ENCODE measurements at regions of chr12 and their contacts with region 1.

Region 1: DNA sequence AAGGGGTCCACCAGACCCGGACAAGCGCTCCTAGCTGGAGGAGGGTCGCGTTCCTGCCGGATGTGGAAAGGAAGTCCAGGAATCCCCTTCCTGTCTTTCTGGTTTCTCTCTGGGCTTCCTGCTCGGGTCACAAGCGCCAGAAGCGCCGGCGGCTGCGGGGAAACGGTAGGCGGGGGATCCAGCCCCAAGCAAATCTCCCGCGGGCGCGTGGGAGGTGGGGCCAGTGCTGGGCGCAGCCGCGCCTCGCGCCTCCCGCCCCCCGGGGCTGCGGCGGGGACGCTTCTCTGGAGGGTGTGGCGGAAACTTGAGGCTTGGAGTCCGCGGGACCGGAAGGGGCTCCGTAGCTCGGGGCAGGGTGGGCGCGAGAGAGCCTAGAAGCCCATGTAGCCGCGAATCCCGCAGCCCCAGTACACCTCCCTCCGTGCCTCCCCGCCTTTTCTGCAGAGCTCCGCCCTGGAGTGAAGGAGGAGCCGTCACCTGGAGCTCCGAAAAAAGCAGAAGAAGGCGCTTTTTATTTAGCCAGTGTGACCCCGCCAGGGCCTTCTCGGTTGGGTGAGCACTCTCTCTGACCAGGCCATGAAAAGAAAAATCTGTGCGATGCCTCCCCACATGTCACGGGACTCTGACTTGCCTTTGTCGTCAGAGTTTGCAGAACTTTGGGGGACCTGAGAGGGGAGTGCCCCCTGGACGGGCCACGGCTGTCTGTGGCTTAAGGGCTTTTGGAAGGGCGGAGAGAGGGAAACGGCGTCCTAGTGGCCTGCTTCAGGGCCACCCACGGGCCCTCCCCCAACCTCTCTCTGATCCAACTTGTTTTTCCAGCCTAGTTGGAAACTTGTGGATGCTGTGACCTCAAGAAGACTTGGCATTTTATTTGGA is 21.4 kb upstream of the CLEC2D start:
- DNase-seq: peak; percentile 93
- H3K4me3 Mint-ChIP-seq: peak overlapping the region; percentile 93
- H3K27ac Mint-ChIP-seq: peak overlapping the region; percentile 97
- H3K4me1 Mint-ChIP-seq: peaks cover 75% of the 10 kb centered on the region
- H3K27me3 Mint-ChIP-seq: peaks cover 3% of the 10 kb centered on the region

Region 2: GRCh38 chr12:8949342-8950220 is 698.5 kb before region 1 on chr12 and contains the start of gene M6PR:
- intact Hi-C with region 1: loop called (anchors 5 kb)
- DNase-seq: peak; percentile 86
- H3K4me3 Mint-ChIP-seq: peak within 1 kb of the TSS; percentile 100
- H3K27ac Mint-ChIP-seq: peak within 1 kb of the TSS; percentile 92
- H3K4me1 Mint-ChIP-seq: peaks cover 72% of the 10 kb centered on the region
- H3K27me3 Mint-ChIP-seq: no peaks in the 10 kb centered on the region
- total RNA-seq, gene M6PR: 179 and 192 TPM in 2 replicates

Region 3: GRCh38 chr12:9364224-9365176 is 283.6 kb before region 1 on chr12:
- intact Hi-C with region 1: loop called (anchors 1 kb)
- DNase-seq: peak; percentile 47
- H3K4me3 Mint-ChIP-seq: peak overlapping the region; percentile 52
- H3K27ac Mint-ChIP-seq: peak overlapping the region; percentile 69
- H3K4me1 Mint-ChIP-seq: peaks cover 55% of the 10 kb centered on the region
- H3K27me3 Mint-ChIP-seq: peaks cover 27% of the 10 kb centered on the region

Region 4: DNA sequence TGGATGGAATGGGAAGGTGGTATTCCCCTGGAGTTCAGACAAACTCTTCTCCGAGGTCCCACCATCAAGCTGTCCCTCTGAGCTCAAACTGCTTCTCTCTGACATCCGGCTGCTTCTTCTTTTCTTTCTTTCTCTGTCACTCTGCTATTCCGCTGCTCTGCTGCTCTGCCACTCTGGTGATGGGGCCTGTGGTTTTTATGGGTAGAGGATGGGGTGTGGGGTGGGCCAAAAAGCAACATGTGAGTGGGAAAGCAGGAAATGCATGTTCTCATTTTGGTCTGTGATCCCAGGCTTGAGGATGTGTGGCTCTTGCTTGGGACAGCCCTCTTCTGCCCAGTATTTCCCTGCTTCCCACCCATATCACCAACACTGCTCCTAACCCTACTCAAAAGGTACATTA is 54.2 kb after region 1 on chr12:
- intact Hi-C with region 1: loop called (anchors 1 kb)
- DNase-seq: peak; percentile 58
- H3K4me3 Mint-ChIP-seq: peak overlapping the region; percentile 58
- H3K27ac Mint-ChIP-seq: peak overlapping the region; percentile 81
- H3K4me1 Mint-ChIP-seq: peaks cover 79% of the 10 kb centered on the region
- H3K27me3 Mint-ChIP-seq: no peaks in the 10 kb centered on the region

Region 5: DNA sequence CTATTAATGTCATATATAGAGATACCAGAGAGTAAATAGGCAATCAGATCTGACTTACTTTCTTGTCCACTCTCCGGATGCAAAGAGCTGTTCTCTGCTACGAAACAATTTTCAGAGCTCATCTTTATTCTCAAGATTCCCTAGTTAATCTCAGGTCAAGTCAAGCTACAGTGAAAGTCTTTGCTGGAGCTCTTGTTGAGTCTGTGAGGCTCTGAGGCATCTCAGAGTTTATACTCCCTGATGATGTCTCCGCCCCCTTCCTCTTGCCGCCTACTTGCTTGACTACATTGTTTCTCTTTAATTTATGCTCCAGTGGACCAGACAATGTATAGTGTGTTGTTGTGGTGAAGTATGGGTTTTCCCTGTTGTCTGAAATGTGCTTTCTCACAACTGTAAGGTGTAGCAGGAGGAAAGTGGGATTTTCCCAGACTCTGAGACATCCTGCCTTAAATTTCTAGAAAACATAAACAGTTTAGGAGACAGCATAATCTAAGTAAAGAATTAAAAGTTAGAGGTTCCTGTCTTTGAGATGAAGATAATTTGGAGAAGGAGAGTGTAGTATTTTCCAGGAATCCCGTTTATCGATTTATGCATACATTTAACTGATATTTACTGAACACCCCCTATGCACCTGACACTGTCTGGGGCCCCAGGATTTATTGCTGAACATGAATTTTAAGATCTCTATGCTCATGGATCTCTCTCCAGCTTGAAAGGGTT is 112.8 kb after region 1 on chr12 and contains the start of gene CD69:
- intact Hi-C with region 1: loop called (anchors 1 kb)
- DNase-seq: peak; percentile 81
- H3K4me3 Mint-ChIP-seq: peak within 1 kb of the TSS; percentile 98
- H3K27ac Mint-ChIP-seq: peak within 1 kb of the TSS; percentile 97
- H3K4me1 Mint-ChIP-seq: peaks cover 68% of the 10 kb centered on the region
- H3K27me3 Mint-ChIP-seq: peaks cover 6% of the 10 kb centered on the region
- total RNA-seq, gene CD69: 90.5 and 93.2 TPM in 2 replicates

Region 6: DNA sequence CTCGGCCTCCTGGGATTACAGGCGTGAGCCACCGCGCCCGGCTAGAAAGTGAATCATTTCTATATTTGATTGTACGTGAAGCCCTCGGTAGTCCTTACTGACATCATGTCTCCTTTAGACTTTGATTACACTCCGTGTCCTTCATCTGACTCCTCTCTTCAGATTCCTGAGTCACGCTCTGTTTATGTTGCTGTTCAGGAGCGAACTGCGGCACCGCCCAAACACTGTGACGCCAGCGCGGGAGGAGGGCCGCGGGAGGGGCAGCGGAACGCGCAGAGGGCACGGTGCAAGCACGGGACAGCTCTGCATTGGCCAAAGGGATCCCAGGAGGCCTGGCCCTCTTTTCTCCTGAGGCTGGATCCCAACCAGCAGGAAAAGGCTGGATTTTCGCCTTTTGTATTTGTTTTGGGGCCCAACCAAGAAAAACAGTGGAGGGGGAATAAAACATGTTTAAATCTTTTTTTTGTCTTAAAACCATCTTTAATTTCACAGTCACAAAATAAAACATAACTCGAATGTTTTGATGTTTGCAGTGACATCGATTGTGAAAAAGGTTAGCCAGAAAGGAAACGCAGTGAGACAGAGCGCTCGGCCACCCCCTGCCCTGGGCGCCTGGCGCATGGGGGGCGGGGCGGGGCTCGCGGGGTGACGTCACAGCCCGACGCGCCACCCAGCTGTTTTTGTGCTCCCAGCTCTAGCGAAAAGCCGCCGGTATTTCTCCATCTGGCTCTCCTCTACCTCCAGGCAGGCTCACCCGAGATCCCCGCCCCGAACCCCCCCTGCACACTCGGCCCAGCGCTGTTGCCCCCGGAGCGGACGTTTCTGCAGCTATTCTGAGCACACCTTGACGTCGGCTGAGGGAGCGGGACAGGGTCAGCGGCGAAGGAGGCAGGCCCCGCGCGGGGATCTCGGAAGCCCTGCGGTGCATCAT is 564.4 kb after region 1 on chr12 and contains the start of gene GABARAPL1:
- intact Hi-C with region 1: loop called (anchors 10 kb)
- DNase-seq: peak; percentile 76
- H3K4me3 Mint-ChIP-seq: peak within 1 kb of the TSS; percentile 84
- H3K27ac Mint-ChIP-seq: peak within 1 kb of the TSS; percentile 93
- H3K4me1 Mint-ChIP-seq: peaks cover 32% of the 10 kb centered on the region
- H3K27me3 Mint-ChIP-seq: peaks cover 23% of the 10 kb centered on the region
- total RNA-seq, gene GABARAPL1: 5.0 and 6.6 TPM in 2 replicates

Measured in activated T-helper 1 cell treated with anti-CD3 and anti-CD28 coated beads, Interleukin-12 subunit alpha, Interleukin-12 subunit beta, Interleukin-2, Interleukin-4 antibody, amounts not matched to agents 30 ng/mL and 10 ng/mL and 1 ng/mL, durations not matched to agents 14 hours and 24 hours and 36 hours (primary cell).